PC-3 (cell line): ENCODE measurements at regions of chr7 and their contacts with region 1.

Region 1: GRCh38 chr7:112765105-112765504 is 25.1 kb downstream of the TMEM168 start:
- DNase-seq: no peak
- ATAC-seq: no peak
- H3K4me3 ChIP-seq: no peak overlapping the region
- H3K27ac ChIP-seq: no peak overlapping the region
- H3K4me1 ChIP-seq: peaks cover 5% of the 10 kb centered on the region; the same call in 1 of the 2 replicates
- H3K27me3 ChIP-seq: no peaks in the 10 kb centered on the region
- CTCF ChIP-seq: no peak

Region 2: GRCh38 chr7:112707655-112708054 is 57.5 kb before region 1 on chr7:
- CTCF ChIA-PET with region 1: interaction called, 14 read pairs
- POLR2A ChIA-PET with region 1: no interaction called
- intact Hi-C with region 1: no loop called
- DNase-seq: no peak
- ATAC-seq: no peak
- H3K4me3 ChIP-seq: no peak overlapping the region
- H3K27ac ChIP-seq: no peak overlapping the region
- H3K4me1 ChIP-seq: no peaks in the 10 kb centered on the region
- H3K27me3 ChIP-seq: peaks cover 10% of the 10 kb centered on the region
- CTCF ChIP-seq: no peak

Region 3: DNA sequence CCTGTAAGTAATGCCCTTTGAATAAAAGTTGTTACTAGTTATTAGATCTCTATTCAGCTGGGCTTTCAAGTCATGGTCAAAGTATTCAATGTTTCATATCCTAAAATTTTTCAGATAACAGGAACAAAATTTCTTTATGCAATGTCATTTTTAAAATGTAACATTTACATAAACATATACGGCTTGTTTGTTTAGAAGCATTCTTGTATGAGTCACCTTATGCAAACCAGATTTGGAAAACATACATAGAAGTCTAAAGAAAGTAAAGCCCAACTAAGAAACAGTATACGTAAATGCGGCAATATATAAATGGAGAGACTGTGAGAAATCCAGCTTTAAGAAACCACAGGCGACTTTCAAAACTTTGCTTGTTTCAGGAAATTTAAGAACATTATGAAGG is 14.6 kb after region 1 on chr7:
- CTCF ChIA-PET with region 1: no interaction called
- POLR2A ChIA-PET with region 1: interaction called, 10 read pairs
- intact Hi-C with region 1: no loop called
- DNase-seq: peak; percentile 35
- ATAC-seq: peak; percentile 69
- H3K4me3 ChIP-seq: no peak overlapping the region
- H3K27ac ChIP-seq: no peak overlapping the region
- H3K4me1 ChIP-seq: peaks cover 11% of the 10 kb centered on the region
- H3K27me3 ChIP-seq: no peaks in the 10 kb centered on the region
- CTCF ChIP-seq: no peak